ENCODE measurements at regions of chr11 and their contacts with region 1.

Region 1: GRCh38 chr11:69718147-69718546 is 14.3 kb upstream of the FGF19 start:
- DNase-seq: peak; percentile 98
- H3K4me3 ChIP-seq: no peak overlapping the region
- H3K27ac ChIP-seq: no peak overlapping the region
- H3K4me1 ChIP-seq: peaks cover 14% of the 10 kb centered on the region
- H3K27me3 ChIP-seq: peaks cover 5% of the 10 kb centered on the region
- CTCF ChIP-seq: peak; percentile 97

Region 2: GRCh38 chr11:68609761-68610160 is 1108.4 kb before region 1 on chr11:
- CTCF ChIA-PET with region 1: no interaction called
- POLR2A ChIA-PET with region 1: no interaction called
- intact Hi-C with region 1: no loop called
- DNase-seq: no peak
- H3K4me3 ChIP-seq: no peak overlapping the region
- H3K27ac ChIP-seq: no peak overlapping the region
- H3K4me1 ChIP-seq: no peaks in the 10 kb centered on the region
- H3K27me3 ChIP-seq: no peaks in the 10 kb centered on the region
- CTCF ChIP-seq: no peak

Region 3: GRCh38 chr11:69636312-69637197 is 81.6 kb before region 1 on chr11:
- CTCF ChIA-PET with region 1: no interaction called
- POLR2A ChIA-PET with region 1: interaction called, 14 read pairs
- intact Hi-C with region 1: no loop called
- DNase-seq: peak; percentile 92
- H3K4me3 ChIP-seq: peak overlapping the region; percentile 86
- H3K27ac ChIP-seq: peak overlapping the region; percentile 99
- H3K4me1 ChIP-seq: peaks cover 30% of the 10 kb centered on the region
- H3K27me3 ChIP-seq: no peaks in the 10 kb centered on the region
- CTCF ChIP-seq: no peak

Region 4: DNA sequence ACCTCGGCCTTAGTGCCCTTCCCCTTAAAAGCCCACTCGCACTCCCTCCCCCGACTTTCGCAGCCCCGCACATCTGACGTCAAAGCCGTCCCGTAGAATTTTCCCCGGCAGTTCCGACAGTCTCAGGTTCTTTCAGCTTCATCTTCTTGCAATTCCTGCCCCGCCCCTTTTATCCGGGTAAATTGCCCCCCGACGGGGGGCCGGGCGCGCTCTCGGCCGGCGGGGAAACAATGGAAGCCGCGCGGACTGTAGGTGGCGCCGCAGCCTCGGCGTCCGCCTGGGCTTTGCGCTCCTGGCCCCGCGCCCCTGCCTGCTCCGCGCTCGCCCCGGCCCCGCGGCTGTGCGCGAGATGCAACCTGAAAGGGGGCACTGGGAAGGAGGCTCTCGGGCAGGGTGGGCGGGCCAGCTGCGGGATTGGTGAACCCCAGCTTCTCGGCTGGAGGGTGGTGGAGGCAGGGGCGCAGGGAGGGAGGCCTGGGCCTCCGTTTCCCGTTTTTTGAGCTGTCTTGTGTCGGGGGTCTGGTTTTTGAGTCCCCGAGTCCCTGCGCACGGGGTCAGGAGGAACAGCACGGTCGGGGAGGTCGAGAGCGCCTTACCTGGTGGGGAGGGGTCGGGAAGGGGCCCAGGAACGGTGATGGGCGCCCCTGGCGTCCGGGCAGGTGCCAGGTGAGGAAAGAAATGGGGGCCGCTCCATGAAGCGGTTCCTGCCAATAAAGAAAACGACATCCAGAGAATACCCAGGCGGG is 13.5 kb before region 1 on chr11:
- CTCF ChIA-PET with region 1: interaction called, 10 read pairs
- POLR2A ChIA-PET with region 1: interaction called, 3 read pairs
- intact Hi-C with region 1: no loop called
- DNase-seq: peak; percentile 94
- H3K4me3 ChIP-seq: peak overlapping the region; percentile 45
- H3K27ac ChIP-seq: no peak overlapping the region
- H3K4me1 ChIP-seq: peaks cover 44% of the 10 kb centered on the region
- H3K27me3 ChIP-seq: peaks cover 35% of the 10 kb centered on the region
- CTCF ChIP-seq: peak; percentile 75

Region 5: DNA sequence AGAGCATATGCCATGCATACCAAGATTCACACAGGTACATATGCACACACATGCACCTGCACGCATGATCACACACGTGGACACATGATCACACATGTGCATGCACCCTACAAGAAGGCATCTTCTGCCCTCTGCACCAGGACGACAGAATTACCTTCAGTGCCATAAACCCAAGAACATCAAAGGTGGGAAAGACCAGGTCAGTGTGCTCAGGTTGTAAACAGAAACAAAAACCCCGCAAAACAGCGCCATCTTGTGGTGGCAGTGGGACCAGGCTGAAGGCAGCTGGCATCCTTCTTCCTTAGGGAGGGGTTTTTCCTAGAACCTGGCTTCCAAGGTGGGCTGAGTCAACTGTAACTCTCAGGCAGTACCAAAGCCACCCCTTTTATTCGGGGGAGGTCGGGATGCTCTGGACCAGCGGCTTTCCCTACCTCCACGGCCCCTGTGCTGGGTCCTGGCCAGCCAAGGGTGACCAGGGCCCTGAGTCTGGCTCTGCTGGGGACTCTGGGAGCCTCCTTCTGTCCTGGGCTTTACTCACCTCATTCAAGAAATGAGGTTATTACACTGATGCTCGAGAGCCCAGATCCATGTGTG is 170.4 kb after region 1 on chr11:
- CTCF ChIA-PET with region 1: interaction called, 6 read pairs
- POLR2A ChIA-PET with region 1: no interaction called
- intact Hi-C with region 1: loop called (anchors 1 kb)
- DNase-seq: peak; percentile 79
- H3K4me3 ChIP-seq: no peak overlapping the region
- H3K27ac ChIP-seq: no peak overlapping the region
- H3K4me1 ChIP-seq: no peaks in the 10 kb centered on the region
- H3K27me3 ChIP-seq: peaks cover 5% of the 10 kb centered on the region
- CTCF ChIP-seq: peak; percentile 99

Region 6: GRCh38 chr11:69950120-69950519 is 232.0 kb after region 1 on chr11:
- CTCF ChIA-PET with region 1: no interaction called
- POLR2A ChIA-PET with region 1: no interaction called
- intact Hi-C with region 1: no loop called
- DNase-seq: peak; percentile 60
- H3K4me3 ChIP-seq: no peak overlapping the region
- H3K27ac ChIP-seq: no peak overlapping the region
- H3K4me1 ChIP-seq: no peaks in the 10 kb centered on the region
- H3K27me3 ChIP-seq: no peaks in the 10 kb centered on the region
- CTCF ChIP-seq: peak; percentile 76

Region 7: GRCh38 chr11:69972351-69972802 is 254.2 kb after region 1 on chr11:
- CTCF ChIA-PET with region 1: no interaction called
- POLR2A ChIA-PET with region 1: no interaction called
- intact Hi-C with region 1: no loop called
- DNase-seq: no peak
- H3K4me3 ChIP-seq: no peak overlapping the region
- H3K27ac ChIP-seq: no peak overlapping the region
- H3K4me1 ChIP-seq: no peaks in the 10 kb centered on the region
- H3K27me3 ChIP-seq: no peaks in the 10 kb centered on the region
- CTCF ChIP-seq: no peak

Measured in A673 (cell line).